ENCODE measurements at regions of chr2 and their contacts with region 1.

Region 1: DNA sequence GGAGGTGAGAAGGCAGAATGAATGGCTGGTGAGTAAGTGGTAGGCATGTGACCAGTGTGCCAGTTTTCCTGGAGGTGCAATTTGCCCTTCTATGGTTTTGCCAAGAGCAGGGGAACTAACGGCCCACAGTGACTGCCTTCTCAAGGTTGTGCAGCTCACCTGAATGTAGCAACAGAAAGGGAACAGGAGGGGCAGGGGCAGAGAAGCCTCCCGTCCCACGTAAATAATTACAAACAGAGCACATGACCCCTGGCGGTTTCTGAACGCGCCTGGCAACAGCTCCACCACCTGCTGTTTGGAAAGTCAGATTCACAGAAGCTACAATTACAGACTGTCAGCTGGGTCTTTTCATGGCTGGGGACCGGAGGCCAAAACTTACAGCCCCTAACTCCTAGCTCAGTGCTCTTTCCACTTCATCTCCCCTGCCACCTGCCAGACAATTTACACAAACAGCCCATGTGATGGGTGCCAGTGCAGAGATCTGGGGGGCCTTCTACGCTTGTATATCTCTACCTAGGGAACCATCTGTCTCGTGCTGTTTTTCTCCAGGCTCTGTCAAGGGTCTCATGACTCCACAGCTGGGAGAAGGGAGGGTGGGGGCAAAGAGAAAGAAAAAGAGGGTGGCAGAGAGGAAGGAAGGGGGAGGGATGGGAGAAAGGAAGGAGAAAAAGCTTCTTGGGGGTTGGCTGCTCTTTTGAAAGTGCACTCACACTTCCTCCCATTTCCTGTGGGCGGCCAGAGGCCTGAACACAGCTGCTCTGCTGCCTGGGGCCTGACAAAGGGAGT is 69.6 kb downstream of the POLR1A start:
- DNase-seq: peak; percentile 87
- H3K4me3 Mint-ChIP-seq: peak overlapping the region; percentile 62
- H3K27ac Mint-ChIP-seq: peak overlapping the region; percentile 99
- H3K4me1 Mint-ChIP-seq: peaks cover 88% of the 10 kb centered on the region
- H3K27me3 Mint-ChIP-seq: no peaks in the 10 kb centered on the region

Region 2: DNA sequence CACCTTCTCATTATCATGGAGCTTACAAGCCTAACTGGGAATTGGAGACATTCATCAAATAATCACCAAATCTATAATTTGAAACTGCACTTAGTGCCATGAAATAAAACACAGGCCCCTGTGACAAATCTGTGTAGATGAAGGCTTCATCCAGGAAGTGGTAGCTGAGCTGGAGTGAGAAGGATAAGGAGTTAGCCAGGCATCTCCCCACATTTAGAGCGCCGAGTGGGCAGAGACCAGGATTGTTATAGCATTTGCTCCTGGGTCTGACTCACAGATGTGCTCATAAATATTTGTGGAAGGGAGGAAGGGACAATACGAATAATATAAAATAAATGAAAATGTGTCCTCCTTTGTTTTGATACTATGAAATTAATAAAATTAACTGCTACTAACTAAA is 499.6 kb before region 1 on chr2:
- CTCF ChIA-PET with region 1: no interaction called
- DNase-seq: no peak
- H3K4me3 Mint-ChIP-seq: no peak overlapping the region
- H3K27ac Mint-ChIP-seq: no peak overlapping the region
- H3K4me1 Mint-ChIP-seq: peaks cover 30% of the 10 kb centered on the region
- H3K27me3 Mint-ChIP-seq: no peaks in the 10 kb centered on the region

Region 3: DNA sequence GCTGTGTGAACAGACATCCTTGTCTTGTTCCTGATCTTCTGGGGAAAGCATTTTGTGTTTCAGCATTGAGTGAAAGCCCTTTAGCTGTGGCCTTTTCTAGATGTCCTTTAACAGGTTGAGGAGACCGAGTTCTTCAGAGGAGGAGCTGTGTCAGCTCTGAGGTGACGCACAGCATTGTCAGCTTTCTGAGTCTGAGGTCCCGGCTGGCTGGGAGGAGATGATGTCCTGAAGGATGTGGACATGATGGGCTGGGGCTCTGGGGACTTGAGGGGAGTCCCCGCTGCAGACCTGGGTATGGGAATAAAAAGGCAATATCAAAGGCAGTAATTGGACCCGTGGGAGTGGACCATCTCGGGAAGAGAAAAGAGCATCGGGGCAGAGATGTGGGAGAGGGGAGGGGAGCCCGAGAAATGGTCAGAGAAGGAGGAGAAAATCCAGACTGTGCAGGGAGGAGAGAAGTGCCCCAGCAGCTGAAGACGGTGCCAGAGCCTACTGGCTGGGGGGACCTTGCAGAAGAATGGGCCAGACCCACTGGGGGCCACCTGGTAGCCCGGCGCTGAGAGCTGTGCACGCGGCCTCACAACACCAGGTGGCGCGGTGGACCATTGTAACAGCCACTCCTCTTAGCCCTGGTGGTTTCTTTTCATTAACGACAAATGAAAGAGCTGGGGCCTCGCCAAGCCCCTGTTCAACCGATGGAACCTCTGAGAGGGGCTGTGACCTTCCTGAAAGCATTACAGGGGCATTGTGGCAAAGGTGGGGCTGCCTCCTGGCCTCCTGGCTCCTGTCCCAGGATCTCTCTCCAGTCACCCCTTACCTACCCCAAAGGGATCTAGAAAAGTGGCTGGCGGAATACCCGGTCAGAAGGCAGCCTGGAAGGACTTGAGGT is 208.8 kb before region 1 on chr2:
- CTCF ChIA-PET with region 1: interaction called, 42 read pairs
- DNase-seq: peak; percentile 88
- H3K4me3 Mint-ChIP-seq: no peak overlapping the region
- H3K27ac Mint-ChIP-seq: no peak overlapping the region
- H3K4me1 Mint-ChIP-seq: peaks cover 33% of the 10 kb centered on the region
- H3K27me3 Mint-ChIP-seq: peaks cover 31% of the 10 kb centered on the region

Region 4: DNA sequence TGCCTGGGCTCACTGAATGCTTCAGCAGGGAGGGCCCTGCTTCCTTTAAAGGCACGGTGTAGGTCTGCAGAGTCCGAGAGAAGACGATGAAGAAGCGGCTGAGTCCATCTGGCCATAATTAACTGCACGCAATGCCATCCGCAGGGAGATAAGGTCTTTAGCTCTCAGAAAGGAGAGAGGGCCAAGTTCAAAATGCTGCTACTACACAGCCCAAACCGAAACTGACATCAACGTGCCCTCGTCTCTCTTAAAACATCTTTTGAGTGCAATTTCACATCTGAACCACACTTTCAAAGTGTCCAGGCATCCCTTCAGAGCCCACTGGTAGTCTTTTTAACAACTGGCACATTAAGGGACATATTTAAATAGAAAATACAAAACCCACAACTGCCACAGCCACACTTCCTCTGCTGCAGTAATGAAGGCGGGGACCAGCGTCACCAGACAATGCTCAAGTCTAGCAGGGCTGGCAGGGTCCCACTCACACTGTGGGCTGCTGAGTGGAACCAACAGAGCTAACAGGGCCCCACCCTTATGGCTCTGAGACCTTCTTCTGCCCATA is 183.1 kb before region 1 on chr2:
- CTCF ChIA-PET with region 1: interaction called, 10 read pairs
- DNase-seq: peak; percentile 77
- H3K4me3 Mint-ChIP-seq: peak overlapping the region; percentile 80
- H3K27ac Mint-ChIP-seq: peak overlapping the region; percentile 100
- H3K4me1 Mint-ChIP-seq: peaks cover 75% of the 10 kb centered on the region
- H3K27me3 Mint-ChIP-seq: no peaks in the 10 kb centered on the region

Region 5: GRCh38 chr2:85888684-85889626 is 147.1 kb before region 1 on chr2 and contains the start of gene ST3GAL5:
- CTCF ChIA-PET with region 1: interaction called, 124 read pairs
- DNase-seq: peak; percentile 95
- H3K4me3 Mint-ChIP-seq: peak within 1 kb of the TSS; percentile 87
- H3K27ac Mint-ChIP-seq: peak within 1 kb of the TSS; percentile 93
- H3K4me1 Mint-ChIP-seq: peaks cover 68% of the 10 kb centered on the region
- H3K27me3 Mint-ChIP-seq: peaks cover 4% of the 10 kb centered on the region

Region 6: DNA sequence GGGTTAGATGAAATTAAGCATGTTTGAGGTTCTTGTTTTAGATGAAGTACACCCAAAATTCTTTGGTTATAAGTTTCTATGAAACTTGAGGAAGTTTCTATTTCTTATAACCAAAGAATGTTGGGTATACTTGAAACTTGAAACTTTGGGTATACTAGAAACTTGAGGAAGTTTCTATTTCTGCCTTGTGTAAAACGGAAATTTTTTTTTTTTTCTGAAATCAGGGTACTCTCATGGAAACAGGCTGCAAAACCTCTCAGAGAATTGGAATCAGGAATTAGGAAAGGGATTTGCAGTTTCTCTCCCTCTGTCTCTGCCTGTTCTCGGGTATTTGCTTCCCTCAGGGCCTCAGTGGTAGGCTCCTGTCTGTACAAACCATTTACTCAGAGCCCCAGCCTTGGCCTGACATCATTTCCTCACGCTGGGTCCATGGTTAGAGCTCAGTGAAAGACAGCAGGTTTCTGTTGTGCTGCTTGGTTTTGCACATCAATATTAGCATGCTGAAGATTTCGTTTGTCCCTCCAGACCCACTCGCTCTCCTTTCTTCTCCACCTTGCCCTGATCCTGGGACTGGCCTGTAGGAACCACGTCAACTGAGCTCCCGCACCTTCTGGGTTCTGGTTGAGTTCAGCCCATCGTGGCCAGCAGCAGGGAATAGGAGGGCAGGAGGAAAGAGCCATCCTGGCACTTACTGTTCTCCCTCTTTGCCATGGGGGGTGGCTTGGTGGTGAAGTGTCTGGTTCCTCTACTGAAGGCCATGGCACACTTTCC is 36.8 kb before region 1 on chr2:
- CTCF ChIA-PET with region 1: interaction called, 18 read pairs
- DNase-seq: peak; percentile 76
- H3K4me3 Mint-ChIP-seq: peak overlapping the region; percentile 42
- H3K27ac Mint-ChIP-seq: peak overlapping the region; percentile 92
- H3K4me1 Mint-ChIP-seq: peaks cover 77% of the 10 kb centered on the region
- H3K27me3 Mint-ChIP-seq: peaks cover 4% of the 10 kb centered on the region